ENCODE measurements at regions of chr6 and their contacts with region 1.

Region 1: DNA sequence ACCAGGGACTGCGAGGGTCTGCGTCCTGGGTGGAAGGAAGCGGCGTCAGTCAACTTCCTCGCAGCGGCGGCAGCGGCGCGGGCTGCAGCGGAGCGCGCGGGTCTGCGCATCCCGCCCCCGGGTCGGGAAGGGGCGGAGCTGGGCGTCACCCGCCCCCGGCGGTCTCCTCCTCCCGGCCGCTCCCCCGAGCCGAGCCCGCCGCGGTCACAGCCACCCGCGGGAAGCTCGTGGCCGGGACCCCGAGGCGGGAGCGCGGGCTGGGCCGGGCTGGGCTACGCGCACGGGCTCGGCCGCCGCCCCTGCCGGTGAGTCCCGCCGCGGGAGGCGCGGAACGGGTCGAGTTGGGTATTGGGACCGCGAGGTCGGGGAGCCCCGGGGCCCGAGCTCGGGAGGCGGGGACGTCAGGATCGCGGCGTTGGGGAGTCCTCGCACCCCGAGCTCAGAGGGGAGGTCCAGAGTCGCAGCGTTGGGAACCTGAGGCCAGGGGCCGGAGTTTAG is at the start of gene PAQR8:
- DNase-seq: peak; percentile 87
- H3K4me3 ChIP-seq: peak within 1 kb of the TSS; percentile 96
- H3K27ac ChIP-seq: peak within 1 kb of the TSS; percentile 38
- H3K4me1 ChIP-seq: peaks cover 40% of the 10 kb centered on the region
- CTCF ChIP-seq: no peak
- total RNA-seq, gene PAQR8: 5.4 and 5.5 TPM in 2 replicates

Region 2: DNA sequence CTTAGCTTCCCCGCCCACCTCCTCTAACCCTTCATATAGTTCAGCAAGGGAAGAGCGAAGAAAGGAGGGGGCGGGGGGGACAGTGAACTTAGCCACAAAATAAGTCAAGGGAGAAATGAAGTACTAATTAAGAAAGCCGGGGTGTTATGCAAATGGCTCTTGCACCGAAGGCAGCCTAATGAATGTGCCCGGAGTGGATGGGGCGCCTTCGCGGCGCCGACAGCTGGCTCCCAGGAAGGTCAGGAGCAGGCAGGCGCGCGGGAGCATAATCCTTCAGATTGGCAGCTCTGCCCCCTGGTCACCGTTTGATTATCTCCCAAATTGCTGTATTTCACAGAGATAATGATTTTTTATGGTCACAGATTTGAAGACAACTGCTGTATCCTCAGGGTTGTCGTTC is 1148.2 kb before region 1 on chr6:
- CTCF ChIA-PET with region 1: no interaction called
- POLR2A ChIA-PET with region 1: no interaction called
- intact Hi-C with region 1: no loop called
- DNase-seq: no peak
- H3K4me3 ChIP-seq: no peak overlapping the region
- H3K27ac ChIP-seq: no peak overlapping the region
- H3K4me1 ChIP-seq: no peaks in the 10 kb centered on the region
- CTCF ChIP-seq: no peak

Region 3: DNA sequence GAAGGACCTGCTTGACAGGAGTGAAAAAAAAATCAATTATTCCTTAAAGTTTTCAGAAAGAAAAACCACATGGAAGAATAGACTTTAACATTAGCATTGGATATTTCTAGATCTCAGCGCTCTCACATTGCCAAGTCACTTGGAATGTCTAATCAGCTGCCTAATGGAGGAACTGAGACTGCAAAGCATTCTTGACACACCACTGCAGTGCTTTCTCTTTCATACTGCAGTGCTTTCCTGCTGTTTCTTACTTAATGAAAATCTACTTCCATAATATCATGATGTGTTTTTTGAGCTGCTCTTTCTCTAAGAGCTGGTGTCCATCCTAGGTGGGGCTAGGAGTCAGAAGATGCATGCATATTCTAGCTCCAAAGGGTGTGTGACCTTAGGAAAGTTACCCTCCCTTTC is 57.0 kb before region 1 on chr6:
- CTCF ChIA-PET with region 1: no interaction called
- POLR2A ChIA-PET with region 1: interaction called, 9 read pairs
- intact Hi-C with region 1: loop called (anchors 1 kb)
- DNase-seq: peak; percentile 59
- H3K4me3 ChIP-seq: peak overlapping the region; percentile 66
- H3K27ac ChIP-seq: peak overlapping the region; percentile 98
- H3K4me1 ChIP-seq: peaks cover 64% of the 10 kb centered on the region
- CTCF ChIP-seq: no peak

Region 4: GRCh38 chr6:53029257-53029656 is 667.3 kb after region 1 on chr6:
- CTCF ChIA-PET with region 1: no interaction called
- POLR2A ChIA-PET with region 1: no interaction called
- intact Hi-C with region 1: no loop called
- DNase-seq: no peak
- H3K4me3 ChIP-seq: no peak overlapping the region
- H3K27ac ChIP-seq: no peak overlapping the region
- H3K4me1 ChIP-seq: no peaks in the 10 kb centered on the region
- CTCF ChIP-seq: no peak